ENCODE measurements at regions of chr3 and their contacts with region 1.

Region 1: DNA sequence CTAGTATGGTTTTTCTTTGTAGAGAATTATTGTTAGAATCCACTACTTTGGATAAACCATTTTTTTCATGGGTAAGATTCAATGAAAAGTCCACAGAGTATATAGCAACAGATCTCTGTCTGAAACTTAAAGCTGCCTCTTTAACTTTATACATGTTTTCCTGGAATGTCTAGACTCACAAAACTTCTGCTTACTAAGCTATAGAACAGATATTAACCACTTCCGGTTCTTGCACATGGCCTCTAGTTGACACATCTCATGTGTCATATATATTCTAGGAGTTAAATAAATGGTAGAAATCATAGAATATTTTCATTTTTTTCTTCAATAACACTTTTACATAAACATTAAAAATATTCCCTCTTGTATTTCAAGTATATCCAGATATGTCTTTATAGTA is 1693.9 kb downstream of the SI start:
- DNase-seq: no peak
- ATAC-seq: no peak
- H3K4me3 ChIP-seq: no peak overlapping the region
- H3K27ac ChIP-seq: no peak overlapping the region
- H3K4me1 ChIP-seq: no peaks in the 10 kb centered on the region
- H3K27me3 ChIP-seq: no peaks in the 10 kb centered on the region
- CTCF ChIP-seq: no peak

Region 2: GRCh38 chr3:163543557-163544176 is 159.3 kb after region 1 on chr3:
- intact Hi-C with region 1: loop called in 1 of 10 experiments (anchors 5 kb)
- DNase-seq: no peak
- ATAC-seq: no peak
- H3K4me3 ChIP-seq: no peak overlapping the region
- H3K27ac ChIP-seq: no peak overlapping the region
- H3K4me1 ChIP-seq: no peaks in the 10 kb centered on the region
- H3K27me3 ChIP-seq: no peaks in the 10 kb centered on the region
- CTCF ChIP-seq: no peak

Region 3: GRCh38 chr3:163939911-163940310 is 555.5 kb after region 1 on chr3:
- intact Hi-C with region 1: no loop called
- DNase-seq: no peak
- ATAC-seq: no peak
- H3K4me3 ChIP-seq: no peak overlapping the region
- H3K27ac ChIP-seq: no peak overlapping the region
- H3K4me1 ChIP-seq: no peaks in the 10 kb centered on the region
- H3K27me3 ChIP-seq: no peaks in the 10 kb centered on the region
- CTCF ChIP-seq: no peak

Measured in heart right ventricle (tissue), 16 donors.